ENCODE measurements at regions of chr5 and their contacts with region 1.

Region 1: GRCh38 chr5:157431544-157432200 is 28.3 kb upstream of the NIPAL4 start:
- DNase-seq: peak; percentile 31
- H3K4me3 ChIP-seq: no peak overlapping the region
- H3K27me3 ChIP-seq: no peaks in the 10 kb centered on the region
- CTCF ChIP-seq: peak; percentile 49

Region 2: DNA sequence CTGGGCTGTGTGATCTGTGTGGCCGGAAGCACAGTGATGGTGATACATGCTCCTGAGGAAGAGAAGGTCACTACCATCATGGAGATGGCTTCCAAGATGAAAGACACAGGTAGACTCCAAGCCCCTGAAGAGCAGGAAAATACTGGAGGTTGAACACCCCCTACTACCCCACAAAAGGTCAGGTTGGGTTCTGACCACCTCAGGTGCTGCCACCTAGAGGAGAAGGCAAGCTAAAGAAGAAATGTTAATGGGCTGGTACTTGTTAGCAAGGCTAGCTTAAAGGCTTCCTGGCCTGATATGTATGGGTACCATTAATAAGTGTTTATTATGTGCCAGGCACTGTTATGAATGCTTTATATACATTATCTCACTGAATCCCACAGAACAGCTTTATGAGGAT is 40.0 kb after region 1 on chr5:
- CTCF ChIA-PET with region 1: interaction called, 46 read pairs
- POLR2A ChIA-PET with region 1: no interaction called
- DNase-seq: no peak
- H3K4me3 ChIP-seq: no peak overlapping the region
- H3K27me3 ChIP-seq: no peaks in the 10 kb centered on the region
- CTCF ChIP-seq: peak; percentile 62

Measured in BJ (cell line).